ENCODE measurements at regions of chr1 and their contacts with region 1.

Region 1: DNA sequence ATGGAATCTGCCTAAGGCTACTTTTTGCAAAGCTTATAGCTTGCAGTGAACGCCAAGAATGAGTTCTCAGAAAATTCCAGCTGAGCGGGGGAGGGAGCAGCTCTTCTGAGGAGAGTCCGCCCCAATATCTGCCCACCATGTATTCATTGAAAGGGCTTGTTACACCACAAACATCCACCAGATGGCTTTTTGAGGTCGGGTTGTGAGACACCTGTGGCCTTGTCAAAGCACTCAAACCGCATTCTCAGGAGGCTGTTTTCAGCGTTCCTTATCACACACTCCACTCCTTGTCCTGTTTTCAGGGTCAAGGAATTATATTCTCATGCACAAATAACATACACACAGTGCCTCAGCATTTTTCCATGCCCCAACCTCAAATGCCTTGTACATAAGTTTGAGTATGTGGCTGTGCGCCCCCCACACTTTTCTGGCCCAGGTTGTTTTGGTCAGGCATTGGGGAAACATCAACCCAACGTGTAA is 3.9 kb upstream of the C4BPB start:
- DNase-seq: peak; percentile 90
- H3K4me3 Mint-ChIP-seq: no peak overlapping the region
- H3K27ac Mint-ChIP-seq: no peak overlapping the region
- H3K4me1 Mint-ChIP-seq: peaks cover 6% of the 10 kb centered on the region
- H3K27me3 Mint-ChIP-seq: peaks cover 21% of the 10 kb centered on the region
- CTCF ChIP-seq: peak; percentile 92

Region 2: DNA sequence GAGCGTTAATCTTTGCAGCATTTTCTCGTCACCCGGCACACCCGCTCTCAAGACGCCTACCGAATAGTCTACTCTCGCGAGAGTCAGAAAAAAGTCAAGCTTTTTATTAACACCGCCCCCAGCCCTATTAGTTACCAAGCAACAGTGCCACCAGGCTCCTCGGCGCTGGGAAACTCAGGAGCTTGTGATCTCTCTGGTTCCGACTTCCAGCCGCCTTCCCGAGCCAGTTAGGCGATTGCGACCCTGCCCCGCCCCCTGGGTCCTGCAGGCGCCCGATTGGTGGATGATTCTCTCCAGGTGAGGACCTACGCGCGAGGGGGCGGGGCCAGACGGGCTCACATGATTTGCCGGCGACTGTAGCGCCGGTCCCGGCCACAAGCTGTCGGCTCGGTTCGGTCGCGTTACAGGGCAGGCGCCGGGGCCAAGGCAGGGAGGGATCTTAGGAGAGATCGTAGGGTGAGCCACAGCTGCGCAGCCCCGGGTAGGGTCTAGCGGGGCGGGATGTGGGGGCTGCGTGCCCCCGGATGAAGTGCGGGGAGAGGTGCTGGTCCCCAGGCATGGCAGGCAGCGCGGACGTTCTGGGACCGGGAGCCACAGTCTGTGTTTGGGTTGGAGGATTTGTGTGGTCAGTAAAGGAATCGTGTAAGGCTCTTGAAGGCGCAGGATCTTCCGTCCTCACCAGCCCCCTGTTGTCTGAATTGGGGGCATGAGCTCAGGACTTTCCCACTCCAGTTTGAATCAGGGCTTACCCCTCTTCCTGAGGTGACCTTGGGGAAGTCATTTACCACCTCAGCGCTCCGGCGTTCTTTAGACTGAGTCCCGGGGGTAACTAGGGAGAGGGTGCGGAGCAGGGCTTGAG is 31.6 kb before region 1 on chr1 and contains the start of gene PFKFB2:
- CTCF ChIA-PET with region 1: interaction called, 20 read pairs
- POLR2A ChIA-PET with region 1: interaction called, 23 read pairs
- intact Hi-C with region 1: no loop called
- DNase-seq: peak; percentile 100
- H3K4me3 Mint-ChIP-seq: peak within 1 kb of the TSS; percentile 89
- H3K27ac Mint-ChIP-seq: peak within 1 kb of the TSS; percentile 95
- H3K4me1 Mint-ChIP-seq: peaks cover 51% of the 10 kb centered on the region
- H3K27me3 Mint-ChIP-seq: no peaks in the 10 kb centered on the region
- CTCF ChIP-seq: peak; percentile 24
- total RNA-seq, gene PFKFB2: 21.1 and 22.0 TPM in 2 replicates

Region 3: DNA sequence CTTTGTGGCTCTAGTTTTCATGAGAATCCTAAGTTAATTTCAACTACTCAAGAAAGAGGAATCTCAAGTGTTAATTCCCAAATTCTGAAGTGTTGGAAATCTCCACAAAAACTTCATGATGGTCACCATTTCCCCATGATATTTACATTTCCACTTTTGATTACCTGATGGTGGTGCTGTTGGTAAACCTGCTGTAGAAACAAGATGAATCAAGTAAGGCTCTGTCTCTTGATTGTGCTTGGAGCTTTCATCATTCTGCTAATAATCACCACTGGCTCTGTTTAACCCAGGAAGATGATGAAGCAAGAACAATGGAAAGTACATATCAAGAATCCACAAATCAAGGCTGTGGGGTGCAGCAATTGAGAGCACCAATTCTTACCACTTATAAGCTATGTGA is 97.1 kb after region 1 on chr1:
- CTCF ChIA-PET with region 1: interaction called, 20 read pairs
- POLR2A ChIA-PET with region 1: no interaction called
- intact Hi-C with region 1: loop called (anchors 1 kb)
- DNase-seq: peak; percentile 66
- H3K4me3 Mint-ChIP-seq: no peak overlapping the region
- H3K27ac Mint-ChIP-seq: no peak overlapping the region
- H3K4me1 Mint-ChIP-seq: no peaks in the 10 kb centered on the region
- H3K27me3 Mint-ChIP-seq: no peaks in the 10 kb centered on the region
- CTCF ChIP-seq: peak; percentile 84

Region 4: DNA sequence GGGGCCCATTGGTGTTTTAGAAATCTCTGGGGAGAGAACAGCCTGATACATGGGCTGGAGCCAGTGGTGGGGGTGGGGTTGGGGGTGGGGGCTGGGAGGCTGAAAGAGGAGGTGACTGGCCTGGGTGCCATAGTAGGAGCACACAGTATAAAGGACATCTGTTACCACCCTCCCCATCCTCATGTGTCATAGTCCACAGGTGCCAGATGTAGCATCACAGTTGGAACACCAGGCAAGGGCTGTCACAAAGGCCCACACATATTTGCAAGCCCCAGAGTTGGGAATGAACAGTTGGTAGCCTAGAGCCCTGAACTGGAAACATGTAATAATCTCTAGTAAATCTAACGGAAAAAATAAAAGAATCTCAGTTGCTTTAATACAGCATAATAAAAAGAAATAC is 314.2 kb after region 1 on chr1:
- CTCF ChIA-PET with region 1: interaction called, 221 read pairs
- POLR2A ChIA-PET with region 1: interaction called, 5 read pairs
- intact Hi-C with region 1: no loop called
- DNase-seq: no peak
- H3K4me3 Mint-ChIP-seq: no peak overlapping the region
- H3K27ac Mint-ChIP-seq: no peak overlapping the region
- H3K4me1 Mint-ChIP-seq: peaks cover under 1% of the 10 kb centered on the region
- H3K27me3 Mint-ChIP-seq: no peaks in the 10 kb centered on the region
- CTCF ChIP-seq: no peak

Region 5: GRCh38 chr1:207565546-207566358 is 481.0 kb after region 1 on chr1:
- CTCF ChIA-PET with region 1: interaction called, 13 read pairs
- POLR2A ChIA-PET with region 1: no interaction called
- intact Hi-C with region 1: no loop called
- DNase-seq: peak; percentile 65
- H3K4me3 Mint-ChIP-seq: no peak overlapping the region
- H3K27ac Mint-ChIP-seq: no peak overlapping the region
- H3K4me1 Mint-ChIP-seq: no peaks in the 10 kb centered on the region
- H3K27me3 Mint-ChIP-seq: peaks cover 32% of the 10 kb centered on the region
- CTCF ChIP-seq: peak; percentile 59